ENCODE measurements at regions of chrX and their contacts with region 1.

Region 1: DNA sequence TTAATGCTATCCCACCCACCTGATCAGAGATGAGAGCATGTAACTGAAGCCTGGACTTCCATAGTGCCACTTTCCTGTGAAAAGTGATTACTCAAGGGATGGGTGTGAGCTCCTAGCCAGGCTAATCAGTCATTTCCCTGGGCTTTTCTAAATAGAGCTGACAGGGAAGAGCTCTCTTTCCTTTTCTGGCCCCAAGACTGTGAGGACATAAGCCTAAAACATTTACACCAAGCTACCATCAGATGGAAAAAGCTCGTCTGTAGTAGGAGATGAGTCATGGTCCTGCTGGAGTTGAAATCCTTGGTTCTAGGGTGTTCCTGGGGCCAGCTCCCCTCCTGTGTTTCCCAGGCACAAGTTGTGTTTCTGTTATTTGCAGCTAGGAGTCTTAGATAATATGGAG is 52.4 kb upstream of the NDP start:
- DNase-seq: peak in 2 of 3 donors; percentile 30 to 56
- H3K4me3 ChIP-seq: no peak overlapping the region
- H3K4me3 Mint-ChIP-seq: no peak overlapping the region
- H3K27ac ChIP-seq: no peak overlapping the region
- H3K27ac Mint-ChIP-seq: peak overlapping the region in 2 of 7 donors; percentile 42 to 61
- H3K4me1 ChIP-seq: peaks cover 5 to 9% of the 10 kb centered on the region in 2 donors
- H3K4me1 Mint-ChIP-seq: peaks cover 12% of the 10 kb centered on the region
- H3K27me3 ChIP-seq: peaks cover 0 to 3% of the 10 kb centered on the region in 2 donors
- H3K27me3 Mint-ChIP-seq: peaks cover 0 to 11% (median 2%) of the 10 kb centered on the region in 3 donors
- CTCF ChIP-seq: no peak

Region 2: DNA sequence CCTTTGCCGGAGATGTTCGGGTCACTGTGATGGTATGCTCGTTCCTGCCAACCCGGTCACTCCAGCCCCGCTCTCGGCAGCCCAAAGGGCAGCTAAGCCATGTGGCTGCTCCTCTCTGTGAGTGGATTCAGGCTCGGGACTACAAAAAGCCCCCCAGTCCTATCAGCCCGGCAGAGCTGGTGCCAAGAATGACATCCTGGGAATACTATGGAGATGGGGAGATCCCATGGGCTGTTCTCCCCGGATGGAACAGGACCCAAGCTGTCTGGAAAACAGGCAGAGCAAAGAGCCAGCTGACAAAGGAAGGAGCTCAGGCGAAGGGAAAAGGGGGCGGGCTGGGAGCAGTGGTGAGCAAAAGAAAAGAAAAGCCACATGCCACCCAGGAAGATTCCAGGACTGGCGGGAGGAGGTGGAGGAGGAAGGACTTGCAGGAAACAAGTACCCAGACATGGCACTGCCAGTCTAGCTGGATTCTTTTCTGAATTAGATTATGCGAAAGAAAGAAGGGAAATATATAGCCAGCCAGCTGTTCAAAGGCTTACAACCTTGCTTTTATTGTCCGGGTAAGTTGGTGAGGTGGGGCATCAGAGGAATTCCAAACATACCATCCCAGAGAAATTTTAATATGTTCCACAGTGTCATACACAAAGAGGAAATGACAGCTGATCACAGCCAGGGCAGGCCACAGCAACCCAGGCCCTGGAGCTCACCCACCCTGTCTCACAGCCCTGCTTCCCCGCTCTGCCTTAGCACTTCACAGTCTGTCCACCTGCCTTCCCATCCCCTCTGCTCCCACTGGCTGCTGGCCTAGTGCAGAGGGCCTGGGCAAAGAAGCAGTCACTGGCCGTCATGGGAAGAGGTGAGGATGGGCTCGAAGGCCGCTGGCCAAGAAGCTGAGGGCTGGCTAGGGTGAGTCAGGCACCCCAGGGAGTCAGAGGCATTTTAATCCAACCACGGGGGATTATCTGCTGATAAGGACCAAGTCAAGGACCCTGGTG is 55.8 kb before region 1 on chrX:
- intact Hi-C with region 1: loop called in 1 of 2 experiments (anchors 10 kb)
- DNase-seq: no peak
- H3K4me3 ChIP-seq: no peak overlapping the region
- H3K4me3 Mint-ChIP-seq: no peak overlapping the region
- H3K27ac ChIP-seq: no peak overlapping the region
- H3K27ac Mint-ChIP-seq: no peak overlapping the region
- H3K4me1 ChIP-seq: peaks cover 0 to 9% of the 10 kb centered on the region in 2 donors
- H3K4me1 Mint-ChIP-seq: peaks cover 17% of the 10 kb centered on the region
- H3K27me3 ChIP-seq: peaks cover 22 to 47% of the 10 kb centered on the region in 2 donors
- H3K27me3 Mint-ChIP-seq: peaks cover 18 to 50% (median 33%) of the 10 kb centered on the region in 3 donors
- CTCF ChIP-seq: no peak